ENCODE measurements at regions of chr2 and their contacts with region 1.

Region 1: GRCh38 chr2:127064642-127065250 is 42.2 kb downstream of the BIN1 start:
- DNase-seq: peak; percentile 98
- H3K4me3 ChIP-seq: no peak overlapping the region
- H3K27ac ChIP-seq: peak overlapping the region; percentile 91
- H3K4me1 ChIP-seq: peaks cover 54% of the 10 kb centered on the region
- H3K27me3 ChIP-seq: no peaks in the 10 kb centered on the region
- CTCF ChIP-seq: peak in 1 of 2 donors; percentile 13
- POLR2A ChIP-seq: peak; percentile 18

Region 2: GRCh38 chr2:126657636-126658318 is 407.0 kb before region 1 on chr2:
- CTCF ChIA-PET with region 1: no interaction called
- POLR2A ChIA-PET with region 1: no interaction called
- dilution Hi-C with region 1: no loop called
- intact Hi-C with region 1: loop called (anchors 5 kb)
- DNase-seq: peak; percentile 73
- H3K4me3 ChIP-seq: no peak overlapping the region
- H3K27ac ChIP-seq: peak overlapping the region; percentile 47
- H3K4me1 ChIP-seq: peaks cover 28% of the 10 kb centered on the region
- H3K27me3 ChIP-seq: no peaks in the 10 kb centered on the region
- CTCF ChIP-seq: no peak
- POLR2A ChIP-seq: no peak

Region 3: DNA sequence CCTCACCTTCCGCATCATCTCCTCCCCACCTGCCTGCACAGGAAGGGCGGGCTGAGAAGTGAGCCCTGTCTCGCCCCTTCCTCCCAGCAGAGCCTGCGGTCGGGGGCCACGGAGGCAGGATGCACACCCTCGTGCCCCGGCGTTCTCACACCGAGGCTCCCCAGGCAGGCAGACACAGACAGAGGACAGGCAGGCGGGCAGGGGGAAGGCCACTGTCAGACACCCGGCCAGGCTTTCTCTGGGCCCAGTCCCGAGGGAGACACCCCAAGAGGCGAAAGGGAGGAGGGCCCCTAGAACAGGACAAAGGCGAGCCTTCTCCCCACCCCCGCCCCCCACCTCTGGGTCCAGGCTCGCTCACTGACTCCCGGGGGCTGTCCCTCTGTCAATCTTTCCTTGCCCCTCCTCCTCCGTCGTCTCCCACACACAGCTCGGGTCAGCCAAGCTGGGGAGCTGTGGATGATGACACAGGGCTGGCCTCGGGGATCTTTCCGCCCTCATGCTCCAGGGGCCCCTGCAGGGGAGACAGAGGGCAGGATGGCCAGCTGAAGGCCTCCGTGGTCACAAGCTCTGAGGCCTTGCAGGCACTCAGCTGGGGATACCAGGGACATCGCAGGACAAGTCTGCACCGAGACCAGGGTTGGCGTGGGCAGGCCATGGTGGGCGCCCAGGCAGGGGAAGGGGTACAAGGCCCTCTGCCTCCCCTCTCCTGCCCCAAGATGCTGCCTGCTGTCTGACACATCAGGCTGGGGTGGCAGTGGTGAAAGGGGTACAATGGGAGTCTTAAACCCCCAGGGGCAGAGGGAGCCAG is 17.3 kb after region 1 on chr2:
- CTCF ChIA-PET with region 1: interaction called, 51 read pairs
- POLR2A ChIA-PET with region 1: interaction called, 6 read pairs
- dilution Hi-C with region 1: no loop called
- intact Hi-C with region 1: loop called (anchors 2 kb)
- DNase-seq: no peak
- H3K4me3 ChIP-seq: no peak overlapping the region
- H3K27ac ChIP-seq: no peak overlapping the region
- H3K4me1 ChIP-seq: peaks cover 24% of the 10 kb centered on the region
- H3K27me3 ChIP-seq: no peaks in the 10 kb centered on the region
- CTCF ChIP-seq: no peak
- POLR2A ChIP-seq: no peak

Region 4: DNA sequence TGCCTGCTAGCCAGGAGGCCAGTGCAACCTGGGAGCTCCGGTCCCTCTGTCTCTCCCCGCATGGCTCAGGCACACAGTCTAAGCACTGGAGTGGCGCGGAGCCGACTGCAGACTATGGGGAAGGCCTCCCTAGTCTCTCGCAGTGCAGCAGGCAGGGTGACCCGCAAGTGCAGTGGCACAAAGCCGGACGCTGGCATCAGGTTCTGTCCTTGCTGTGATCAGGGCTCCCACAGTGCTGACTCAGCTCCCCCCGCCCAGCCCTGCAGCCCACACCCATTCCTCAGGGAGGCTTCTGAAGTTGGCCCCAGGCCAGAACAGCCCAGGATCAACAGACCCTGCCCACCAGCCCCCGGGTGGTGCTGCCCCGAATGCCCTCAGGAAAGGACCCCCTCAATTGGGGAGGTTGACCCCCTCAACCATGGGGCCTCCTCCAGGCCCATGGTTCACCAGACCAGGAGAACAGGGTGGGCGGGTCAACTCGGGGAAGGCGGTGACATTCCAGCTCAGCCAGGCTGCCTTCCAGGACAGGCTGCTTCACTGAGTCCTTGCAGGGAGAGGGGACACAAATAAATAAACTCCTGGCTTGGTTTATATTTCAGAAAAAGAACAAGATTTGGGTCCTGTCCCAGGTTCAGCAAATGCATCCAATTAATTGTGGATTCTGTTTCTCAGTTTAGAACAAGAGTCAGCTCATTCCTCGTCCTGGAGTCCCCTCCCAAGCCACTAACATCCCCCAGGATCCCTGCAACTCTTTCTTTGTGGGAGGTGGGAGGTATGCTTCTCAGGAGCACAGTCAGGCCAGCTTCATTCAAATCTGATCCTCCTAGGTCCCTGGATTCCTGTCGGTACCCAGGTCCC is 30.0 kb after region 1 on chr2:
- CTCF ChIA-PET with region 1: interaction called, 16 read pairs
- POLR2A ChIA-PET with region 1: no interaction called
- dilution Hi-C with region 1: no loop called
- intact Hi-C with region 1: loop called (anchors 1 kb)
- DNase-seq: no peak
- H3K4me3 ChIP-seq: no peak overlapping the region
- H3K27ac ChIP-seq: no peak overlapping the region
- H3K4me1 ChIP-seq: peaks cover 11% of the 10 kb centered on the region
- H3K27me3 ChIP-seq: no peaks in the 10 kb centered on the region
- CTCF ChIP-seq: no peak
- POLR2A ChIP-seq: no peak

Region 5: GRCh38 chr2:127122361-127123027 is 57.7 kb after region 1 on chr2:
- CTCF ChIA-PET with region 1: no interaction called
- POLR2A ChIA-PET with region 1: no interaction called
- dilution Hi-C with region 1: no loop called
- intact Hi-C with region 1: no loop called
- DNase-seq: no peak
- H3K4me3 ChIP-seq: no peak overlapping the region
- H3K27ac ChIP-seq: no peak overlapping the region
- H3K4me1 ChIP-seq: no peaks in the 10 kb centered on the region
- H3K27me3 ChIP-seq: peaks cover 7 to 14% of the 10 kb centered on the region in 2 experiments
- CTCF ChIP-seq: no peak
- POLR2A ChIP-seq: no peak

Region 6: DNA sequence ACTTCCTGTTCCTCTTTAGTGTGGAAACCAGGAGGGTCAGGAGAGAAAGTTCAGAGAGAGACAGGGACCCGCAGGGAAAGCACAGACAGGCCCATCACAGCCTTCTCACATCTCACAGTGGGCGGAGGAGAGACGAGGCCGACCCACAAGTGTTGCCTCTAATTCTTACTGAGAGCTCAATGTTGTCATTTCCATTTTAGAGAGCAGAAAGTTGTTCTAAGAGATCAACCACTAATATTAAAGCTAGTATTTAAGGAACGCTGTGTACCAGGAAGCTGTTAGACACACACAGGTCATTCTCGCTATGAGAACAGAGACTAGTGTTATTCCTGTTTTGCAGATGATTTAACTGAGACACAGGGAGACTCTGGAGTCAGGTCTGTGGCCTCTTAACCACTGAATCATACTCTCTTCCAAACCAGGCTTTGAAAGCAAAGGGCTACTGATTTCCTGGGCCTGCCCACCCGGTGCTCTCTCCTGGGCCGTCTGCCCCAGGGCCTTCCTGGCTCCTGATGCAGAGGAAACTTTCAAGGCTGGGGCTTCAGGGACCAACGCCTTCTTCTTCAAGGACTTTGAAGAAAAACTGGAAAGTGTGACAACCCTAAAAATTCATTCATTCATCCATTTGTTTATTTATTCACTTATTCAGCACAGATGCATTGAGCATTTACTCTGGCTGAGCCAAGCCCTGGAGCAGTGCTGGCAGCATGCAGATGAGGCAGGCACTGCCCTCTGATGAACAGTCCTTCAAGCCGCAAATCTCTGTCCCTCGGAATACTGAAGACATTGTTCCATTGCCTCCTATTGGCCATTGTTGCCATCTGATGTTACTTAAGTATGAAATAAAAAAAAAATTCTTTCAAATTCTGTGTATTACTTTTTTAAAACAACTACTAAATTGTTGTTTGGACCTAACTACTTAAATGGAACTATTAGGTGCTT is 79.4 kb after region 1 on chr2:
- CTCF ChIA-PET with region 1: interaction called, 18 read pairs
- POLR2A ChIA-PET with region 1: no interaction called
- dilution Hi-C with region 1: no loop called
- intact Hi-C with region 1: no loop called
- DNase-seq: peak; percentile 32
- H3K4me3 ChIP-seq: no peak overlapping the region
- H3K27ac ChIP-seq: peak overlapping the region; percentile 24
- H3K4me1 ChIP-seq: peaks cover 24% of the 10 kb centered on the region
- H3K27me3 ChIP-seq: peaks cover 0 to 7% of the 10 kb centered on the region in 2 experiments
- CTCF ChIP-seq: no peak
- POLR2A ChIP-seq: no peak

Region 7: GRCh38 chr2:127174136-127174535 is 109.4 kb after region 1 on chr2:
- CTCF ChIA-PET with region 1: interaction called, 106 read pairs
- POLR2A ChIA-PET with region 1: no interaction called
- dilution Hi-C with region 1: no loop called
- intact Hi-C with region 1: loop called (anchors 1 kb)
- DNase-seq: no peak
- H3K4me3 ChIP-seq: no peak overlapping the region
- H3K27ac ChIP-seq: no peak overlapping the region
- H3K4me1 ChIP-seq: no peaks in the 10 kb centered on the region
- H3K27me3 ChIP-seq: no peaks in the 10 kb centered on the region
- CTCF ChIP-seq: peak; percentile 8 to 60
- POLR2A ChIP-seq: no peak

Region 8: DNA sequence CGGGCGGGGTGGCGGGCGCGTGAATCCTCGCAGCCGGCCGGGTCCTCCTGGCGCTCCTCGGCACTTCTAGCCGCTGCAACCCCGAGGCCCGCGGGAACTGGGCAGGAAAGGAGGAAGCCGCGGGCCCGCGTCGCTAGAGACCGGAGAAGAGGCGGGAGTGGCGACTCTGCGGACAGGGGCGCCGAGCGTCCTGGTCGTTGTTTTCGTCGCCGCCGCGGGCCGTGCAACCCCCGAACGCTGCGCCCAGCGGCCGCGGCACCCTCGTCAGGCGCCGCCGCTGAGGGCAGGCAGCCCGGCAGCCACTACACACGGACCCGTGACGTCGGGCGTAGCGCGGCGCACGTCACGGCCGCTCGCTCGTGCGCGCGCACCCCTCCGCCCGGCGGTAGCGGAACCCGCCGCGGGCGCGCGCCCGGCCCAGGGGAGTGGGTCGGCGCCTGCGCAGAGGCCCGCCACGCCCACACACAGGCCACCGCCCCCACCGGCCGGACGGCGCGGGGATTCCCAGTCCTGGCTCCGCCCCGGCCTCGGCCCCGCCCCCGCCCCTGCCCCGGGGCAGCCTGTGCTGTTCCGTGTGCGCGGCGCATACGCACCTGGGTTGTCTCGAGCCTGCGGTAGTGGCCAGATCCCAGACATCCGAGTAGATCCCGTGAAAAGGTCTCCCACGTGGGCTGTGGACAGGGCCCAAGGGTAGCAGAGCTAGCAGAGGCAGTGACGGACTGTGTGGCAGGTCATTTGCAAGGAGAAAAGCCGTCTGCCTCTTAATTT is 323.1 kb after region 1 on chr2 and contains the start of gene MAP3K2:
- CTCF ChIA-PET with region 1: no interaction called
- POLR2A ChIA-PET with region 1: no interaction called
- dilution Hi-C with region 1: no loop called
- intact Hi-C with region 1: loop called (anchors 2 kb)
- DNase-seq: peak; percentile 91
- H3K4me3 ChIP-seq: peak within 1 kb of the TSS; percentile 69 to 77 (median 75)
- H3K27ac ChIP-seq: peak within 1 kb of the TSS; percentile 94
- H3K4me1 ChIP-seq: peaks cover 24% of the 10 kb centered on the region
- H3K27me3 ChIP-seq: no peaks in the 10 kb centered on the region
- CTCF ChIP-seq: no peak
- POLR2A ChIP-seq: peak; percentile 83
- total RNA-seq, gene MAP3K2: 20.5 and 25.7 TPM in 2 replicates

Measured in endothelial cell of umbilical vein (primary cell).